Activated naive CD4-positive, alpha-beta T cell treated with anti-CD3 and anti-CD28 coated beads for 36 hours (primary cell): ENCODE measurements at regions of chr12 and their contacts with region 1.

Region 1: GRCh38 chr12:27703710-27704452 is 6.8 kb upstream of the MRPS35 start:
- DNase-seq: peak; percentile 92
- H3K4me3 Mint-ChIP-seq: no peak overlapping the region
- H3K27ac Mint-ChIP-seq: no peak overlapping the region
- H3K4me1 Mint-ChIP-seq: peaks cover 2% of the 10 kb centered on the region
- H3K27me3 Mint-ChIP-seq: no peaks in the 10 kb centered on the region

Region 2: GRCh38 chr12:27034607-27035293 is 669.1 kb before region 1 on chr12:
- CTCF ChIA-PET with region 1: no interaction called
- intact Hi-C with region 1: loop called (anchors 5 kb)
- DNase-seq: no peak
- H3K4me3 Mint-ChIP-seq: no peak overlapping the region
- H3K27ac Mint-ChIP-seq: no peak overlapping the region
- H3K4me1 Mint-ChIP-seq: no peaks in the 10 kb centered on the region
- H3K27me3 Mint-ChIP-seq: no peaks in the 10 kb centered on the region

Region 3: GRCh38 chr12:27332407-27333301 is 371.2 kb before region 1 on chr12 and contains the start of gene BMAL2:
- CTCF ChIA-PET with region 1: no interaction called
- intact Hi-C with region 1: loop called (anchors 2 kb)
- DNase-seq: peak; percentile 44
- H3K4me3 Mint-ChIP-seq: peak within 1 kb of the TSS; percentile 90
- H3K27ac Mint-ChIP-seq: peak within 1 kb of the TSS; percentile 74
- H3K4me1 Mint-ChIP-seq: peaks cover 34% of the 10 kb centered on the region
- H3K27me3 Mint-ChIP-seq: peaks cover 30% of the 10 kb centered on the region
- total RNA-seq, gene BMAL2: 7.9 to 9.2 TPM

Region 4: GRCh38 chr12:27424631-27425230 is 279.1 kb before region 1 on chr12:
- CTCF ChIA-PET with region 1: no interaction called
- intact Hi-C with region 1: loop called (anchors 2 kb)
- DNase-seq: no peak
- H3K4me3 Mint-ChIP-seq: no peak overlapping the region
- H3K27ac Mint-ChIP-seq: no peak overlapping the region
- H3K4me1 Mint-ChIP-seq: no peaks in the 10 kb centered on the region
- H3K27me3 Mint-ChIP-seq: no peaks in the 10 kb centered on the region

Region 5: DNA sequence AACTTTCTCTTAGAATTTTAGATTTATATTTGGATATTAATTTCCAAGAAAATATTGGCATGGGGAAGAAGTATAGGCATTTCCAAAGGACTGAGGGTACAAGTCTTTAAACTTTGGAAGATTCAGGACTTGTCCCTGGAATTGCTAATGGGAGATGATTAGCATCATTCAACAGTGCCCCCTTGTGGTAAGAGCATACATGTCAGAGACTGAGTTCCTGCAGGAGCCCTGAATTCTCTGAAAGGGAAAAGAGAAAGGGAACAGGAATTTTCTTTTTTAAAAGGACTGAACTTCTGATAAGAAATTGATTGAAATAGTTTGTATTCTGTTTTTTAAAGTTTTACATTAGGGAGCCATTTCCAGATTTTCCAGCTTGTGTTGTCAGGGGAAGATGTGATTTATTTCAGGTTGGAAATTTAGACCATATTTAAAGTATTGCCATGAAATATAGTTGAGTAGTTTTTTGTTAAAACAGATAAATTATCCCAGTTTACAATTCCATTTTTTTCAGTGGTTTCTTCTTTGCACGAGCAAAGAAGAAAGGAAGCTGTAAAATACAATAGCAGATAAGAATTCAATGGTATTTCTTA is 51.6 kb before region 1 on chr12:
- CTCF ChIA-PET with region 1: interaction called, 4 read pairs
- intact Hi-C with region 1: loop called (anchors 5 kb)
- DNase-seq: peak; percentile 44
- H3K4me3 Mint-ChIP-seq: no peak overlapping the region
- H3K27ac Mint-ChIP-seq: no peak overlapping the region
- H3K4me1 Mint-ChIP-seq: peaks cover 4% of the 10 kb centered on the region
- H3K27me3 Mint-ChIP-seq: no peaks in the 10 kb centered on the region